ENCODE measurements at regions of chr19 and their contacts with region 1.

Region 1: GRCh38 chr19:45391340-45391739 is 13.5 kb downstream of the PPP1R13L start:
- H3K4me3 ChIP-seq: no peak overlapping the region
- H3K27ac ChIP-seq: no peak overlapping the region
- H3K4me1 ChIP-seq: no peaks in the 10 kb centered on the region
- CTCF ChIP-seq: no peak

Region 2: GRCh38 chr19:45358213-45358792 is 33.0 kb before region 1 on chr19:
- CTCF ChIA-PET with region 1: no interaction called
- POLR2A ChIA-PET with region 1: no interaction called
- H3K4me3 ChIP-seq: no peak overlapping the region
- H3K27ac ChIP-seq: no peak overlapping the region
- H3K4me1 ChIP-seq: no peaks in the 10 kb centered on the region
- CTCF ChIP-seq: no peak

Region 3: GRCh38 chr19:45423589-45424190 is 32.4 kb after region 1 on chr19 and contains the start of gene ERCC1:
- CTCF ChIA-PET with region 1: no interaction called
- POLR2A ChIA-PET with region 1: interaction called, 10 read pairs
- H3K4me3 ChIP-seq: peak within 1 kb of the TSS; percentile 50
- H3K27ac ChIP-seq: peak within 1 kb of the TSS; percentile 88
- H3K4me1 ChIP-seq: peaks cover 10% of the 10 kb centered on the region
- CTCF ChIP-seq: no peak

Measured in HEK293 (cell line).